Ascending aorta (tissue), 2 donors: ENCODE measurements at regions of chr5 and their contacts with region 1.

Region 1: GRCh38 chr5:150589871-150590601 is 50.4 kb upstream of the SYNPO start:
- DNase-seq: peak; percentile 11 to 82
- H3K4me3 ChIP-seq: peak overlapping the region in 1 of 2 donors; percentile 4
- H3K27ac ChIP-seq: peak overlapping the region; percentile 58 to 96
- H3K4me1 ChIP-seq: peaks cover 14 to 51% of the 10 kb centered on the region in 2 donors
- H3K27me3 ChIP-seq: no peaks in the 10 kb centered on the region
- CTCF ChIP-seq: peak; percentile 59 to 83 (median 79)

Region 2: DNA sequence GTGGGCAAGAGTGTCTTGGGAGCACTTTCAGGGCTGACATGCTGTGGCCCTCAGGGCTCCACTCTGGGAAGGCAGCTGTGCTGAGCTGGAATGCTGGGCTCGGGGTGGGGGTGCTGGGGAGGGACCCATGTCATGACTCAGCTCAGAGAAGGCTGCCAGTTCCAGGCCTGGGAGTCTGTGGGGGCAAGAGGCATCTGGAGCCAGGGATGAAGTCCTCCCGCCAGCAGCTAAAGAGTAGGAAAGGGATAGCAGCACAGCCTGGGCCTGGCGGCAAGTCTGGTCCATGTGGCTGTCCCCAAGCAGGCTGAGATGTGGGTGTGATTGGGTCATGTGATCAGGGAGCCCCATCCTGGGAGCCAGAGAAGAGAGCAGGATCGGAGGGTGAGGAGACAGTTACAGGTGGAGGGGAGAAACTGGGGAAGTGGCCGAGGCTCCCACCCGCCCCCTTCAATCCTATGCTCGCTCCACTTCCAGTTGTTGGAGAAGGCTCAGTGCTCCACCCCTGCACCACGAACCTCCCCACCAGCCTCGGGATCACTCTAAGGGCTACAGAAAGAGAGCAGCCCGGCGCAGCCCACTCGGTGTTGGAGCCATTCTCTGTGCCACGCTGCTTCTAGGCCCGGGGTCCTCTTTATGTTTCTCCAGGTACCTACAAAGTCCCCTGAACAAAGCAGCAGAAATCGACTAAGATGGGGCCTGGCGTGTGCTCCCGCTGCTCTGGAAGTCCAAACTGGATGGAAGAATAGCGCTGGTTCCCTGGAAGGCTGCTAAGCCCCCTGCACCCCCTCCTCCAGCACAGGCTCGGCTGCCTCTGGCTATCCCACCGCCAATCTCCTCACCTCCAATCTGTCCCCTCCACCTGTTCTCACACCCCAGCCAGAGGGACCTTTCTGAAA is 446.4 kb before region 1 on chr5:
- intact Hi-C with region 1: loop called (anchors 10 kb)
- DNase-seq: peak; percentile 71 to 95
- H3K4me3 ChIP-seq: peak overlapping the region; percentile 11 to 46
- H3K27ac ChIP-seq: peak overlapping the region; percentile 98 to 99
- H3K4me1 ChIP-seq: peaks cover 68 to 94% of the 10 kb centered on the region in 2 donors
- H3K27me3 ChIP-seq: no peaks in the 10 kb centered on the region
- CTCF ChIP-seq: no peak

Region 3: DNA sequence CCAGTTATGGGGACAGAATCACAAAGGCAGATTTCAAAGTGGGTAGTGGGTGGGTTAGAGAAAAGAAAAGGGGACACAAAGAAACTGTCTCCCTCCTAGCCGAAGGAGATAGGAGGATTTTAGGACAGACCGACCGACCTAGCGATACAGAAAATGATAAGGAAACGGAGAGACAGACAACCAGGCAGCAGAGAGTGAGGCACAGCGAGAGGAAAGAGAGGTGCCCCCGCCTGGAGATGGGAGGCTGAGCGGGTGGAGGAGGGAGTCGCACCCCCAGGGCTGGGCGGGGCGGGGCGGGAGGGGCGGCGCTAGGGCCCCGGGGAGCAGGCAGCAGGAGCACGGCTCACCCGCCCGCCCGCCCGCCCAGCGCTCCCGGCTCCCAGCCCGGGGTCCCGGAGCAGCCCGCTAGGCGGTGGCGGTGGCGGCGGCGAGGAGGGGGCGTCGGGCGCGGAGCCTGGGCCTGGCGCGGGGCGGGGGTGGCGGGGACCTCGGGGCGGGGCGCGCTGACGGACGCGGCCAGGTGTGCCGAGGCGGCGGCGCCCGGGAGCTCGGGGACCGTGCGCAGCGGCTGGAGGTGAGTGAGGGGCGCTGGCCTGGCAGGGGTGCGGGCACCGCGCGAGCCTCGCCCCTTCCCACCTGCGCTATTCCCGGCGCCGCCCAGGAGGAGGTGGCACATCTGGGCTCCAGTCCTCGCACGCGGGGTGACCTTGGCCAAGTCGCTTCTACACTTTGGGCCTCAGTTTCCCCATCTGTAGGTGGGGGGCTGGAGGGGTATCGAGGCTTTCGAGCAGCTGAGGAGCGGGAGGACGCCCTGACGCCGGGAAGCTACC is 34.5 kb after region 1 on chr5:
- intact Hi-C with region 1: loop called (anchors 5 kb)
- DNase-seq: no peak
- H3K4me3 ChIP-seq: peak overlapping the region; percentile 81 to 95
- H3K27ac ChIP-seq: peak overlapping the region; percentile 96 to 99
- H3K4me1 ChIP-seq: peaks cover 18 to 51% of the 10 kb centered on the region in 2 donors
- H3K27me3 ChIP-seq: no peaks in the 10 kb centered on the region
- CTCF ChIP-seq: no peak

Region 4: GRCh38 chr5:150656191-150657132 is 66.4 kb after region 1 on chr5:
- intact Hi-C with region 1: loop called (anchors 1 kb)
- DNase-seq: no peak
- H3K4me3 ChIP-seq: peak overlapping the region; percentile 44 to 59
- H3K27ac ChIP-seq: peak overlapping the region; percentile 86 to 90
- H3K4me1 ChIP-seq: peaks cover 19 to 56% of the 10 kb centered on the region in 2 donors
- H3K27me3 ChIP-seq: no peaks in the 10 kb centered on the region
- CTCF ChIP-seq: peak; percentile 39 to 66 (median 58)